ENCODE measurements at regions of chr19 and their contacts with region 1.

Region 1: DNA sequence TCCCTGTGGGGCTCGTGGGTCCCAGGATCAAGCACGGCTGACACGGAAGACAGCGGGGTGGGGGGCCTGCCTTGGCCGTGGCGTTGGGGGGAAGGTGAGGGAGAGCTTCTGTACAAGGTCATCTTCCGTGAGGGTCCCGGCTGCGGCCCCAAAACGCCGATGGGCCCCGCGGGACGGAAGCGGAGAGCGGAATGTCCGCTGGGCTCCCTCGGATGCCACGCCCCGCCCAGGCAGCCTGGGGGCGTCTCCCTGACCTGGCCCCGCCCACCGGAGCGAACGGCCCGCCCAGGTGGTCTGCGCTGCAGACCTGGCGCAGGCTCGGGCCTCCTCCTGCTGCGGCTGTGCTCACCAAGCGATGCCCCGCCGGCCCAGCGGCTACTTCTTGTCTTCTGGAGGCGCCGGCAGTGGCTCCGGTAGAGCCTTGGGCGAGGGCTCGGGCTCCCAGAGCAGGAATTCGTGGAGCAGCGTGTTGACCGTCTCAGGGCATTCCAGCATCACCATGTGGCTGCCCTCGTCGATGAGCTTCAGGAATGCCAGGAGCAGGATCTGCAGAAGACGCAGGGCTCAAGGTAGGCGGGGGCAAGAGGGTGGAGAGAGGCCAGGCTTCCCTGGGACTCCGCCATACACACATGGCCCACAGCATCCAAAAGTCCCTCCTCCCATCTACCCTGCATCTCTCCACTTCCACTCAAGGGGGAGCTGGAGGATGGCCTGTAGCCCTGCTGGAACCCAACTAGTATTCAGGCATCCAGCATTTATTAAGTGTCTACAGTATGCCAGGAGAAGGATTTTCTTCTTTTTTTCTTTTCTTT is 10.7 kb downstream of the ABHD8 start:
- DNase-seq: peak; percentile 58 to 91 (median 71)
- ATAC-seq: peak; percentile 98
- H3K4me3 ChIP-seq: peak overlapping the region; percentile 83
- H3K4me3 Mint-ChIP-seq: peak overlapping the region; percentile 92
- H3K27ac ChIP-seq: no peak overlapping the region
- H3K27ac Mint-ChIP-seq: peak overlapping the region; percentile 19
- H3K4me1 ChIP-seq: peaks cover 18% of the 10 kb centered on the region
- H3K4me1 Mint-ChIP-seq: peaks cover 9% of the 10 kb centered on the region
- H3K27me3 ChIP-seq: no peaks in the 10 kb centered on the region
- H3K27me3 Mint-ChIP-seq: peaks cover 4% of the 10 kb centered on the region
- CTCF ChIP-seq: peak; percentile 84

Region 2: GRCh38 chr19:16951529-16951928 is 341.0 kb before region 1 on chr19:
- CTCF ChIA-PET with region 1: no interaction called
- POLR2A ChIA-PET with region 1: no interaction called
- intact Hi-C with region 1: no loop called
- DNase-seq: no peak
- ATAC-seq: no peak
- H3K4me3 ChIP-seq: no peak overlapping the region
- H3K4me3 Mint-ChIP-seq: no peak overlapping the region
- H3K27ac ChIP-seq: no peak overlapping the region
- H3K27ac Mint-ChIP-seq: no peak overlapping the region
- H3K4me1 ChIP-seq: no peaks in the 10 kb centered on the region
- H3K4me1 Mint-ChIP-seq: no peaks in the 10 kb centered on the region
- H3K27me3 ChIP-seq: no peaks in the 10 kb centered on the region
- H3K27me3 Mint-ChIP-seq: peaks cover 33% of the 10 kb centered on the region
- CTCF ChIP-seq: no peak

Region 3: GRCh38 chr19:17232275-17232674 is 60.2 kb before region 1 on chr19:
- CTCF ChIA-PET with region 1: no interaction called
- POLR2A ChIA-PET with region 1: no interaction called
- intact Hi-C with region 1: no loop called
- DNase-seq: no peak
- ATAC-seq: no peak
- H3K4me3 ChIP-seq: no peak overlapping the region
- H3K4me3 Mint-ChIP-seq: peak overlapping the region; percentile 15
- H3K27ac ChIP-seq: no peak overlapping the region
- H3K27ac Mint-ChIP-seq: no peak overlapping the region
- H3K4me1 ChIP-seq: peaks cover 29% of the 10 kb centered on the region
- H3K4me1 Mint-ChIP-seq: peaks cover 6% of the 10 kb centered on the region
- H3K27me3 ChIP-seq: no peaks in the 10 kb centered on the region
- H3K27me3 Mint-ChIP-seq: no peaks in the 10 kb centered on the region
- CTCF ChIP-seq: no peak

Region 4: GRCh38 chr19:17327651-17328516 is 35.4 kb after region 1 on chr19:
- CTCF ChIA-PET with region 1: interaction called, 10 read pairs
- POLR2A ChIA-PET with region 1: interaction called, 11 read pairs
- intact Hi-C with region 1: no loop called
- DNase-seq: peak in 13 of 14 experiments; percentile 40 to 82 (median 54)
- ATAC-seq: peak; percentile 73
- H3K4me3 ChIP-seq: peak overlapping the region; percentile 61
- H3K4me3 Mint-ChIP-seq: peak overlapping the region; percentile 85
- H3K27ac ChIP-seq: peak overlapping the region in 1 of 2 donors; percentile 59
- H3K27ac Mint-ChIP-seq: peak overlapping the region; percentile 51
- H3K4me1 ChIP-seq: peaks cover 34% of the 10 kb centered on the region
- H3K4me1 Mint-ChIP-seq: peaks cover 13% of the 10 kb centered on the region
- H3K27me3 ChIP-seq: no peaks in the 10 kb centered on the region
- H3K27me3 Mint-ChIP-seq: no peaks in the 10 kb centered on the region
- CTCF ChIP-seq: no peak

Region 5: GRCh38 chr19:17336872-17337722 is 44.6 kb after region 1 on chr19 and contains the start of gene GTPBP3:
- CTCF ChIA-PET with region 1: interaction called, 8 read pairs
- POLR2A ChIA-PET with region 1: interaction called, 11 read pairs
- intact Hi-C with region 1: loop called (anchors 2 to 5 kb)
- DNase-seq: peak; percentile 92 to 98 (median 95)
- ATAC-seq: peak; percentile 89
- H3K4me3 ChIP-seq: peak within 1 kb of the TSS; percentile 71
- H3K4me3 Mint-ChIP-seq: peak within 1 kb of the TSS; percentile 93
- H3K27ac ChIP-seq: peak within 1 kb of the TSS; percentile 73 to 79
- H3K27ac Mint-ChIP-seq: peak within 1 kb of the TSS; percentile 86
- H3K4me1 ChIP-seq: peaks cover 54% of the 10 kb centered on the region
- H3K4me1 Mint-ChIP-seq: peaks cover 36% of the 10 kb centered on the region
- H3K27me3 ChIP-seq: no peaks in the 10 kb centered on the region
- H3K27me3 Mint-ChIP-seq: no peaks in the 10 kb centered on the region
- CTCF ChIP-seq: no peak
- total RNA-seq, gene GTPBP3: 21.2 to 24.0 TPM

Region 6: GRCh38 chr19:17346109-17346671 is 53.7 kb after region 1 on chr19:
- CTCF ChIA-PET with region 1: interaction called, 3 read pairs
- POLR2A ChIA-PET with region 1: no interaction called
- intact Hi-C with region 1: loop called in 1 of 2 experiments (anchors 1 kb)
- DNase-seq: peak; percentile 52 to 87 (median 72)
- ATAC-seq: peak; percentile 98
- H3K4me3 ChIP-seq: no peak overlapping the region
- H3K4me3 Mint-ChIP-seq: peak overlapping the region; percentile 34
- H3K27ac ChIP-seq: no peak overlapping the region
- H3K27ac Mint-ChIP-seq: no peak overlapping the region
- H3K4me1 ChIP-seq: peaks cover 10% of the 10 kb centered on the region
- H3K4me1 Mint-ChIP-seq: peaks cover 5% of the 10 kb centered on the region
- H3K27me3 ChIP-seq: peaks cover 2 to 18% of the 10 kb centered on the region in 2 experiments
- H3K27me3 Mint-ChIP-seq: peaks cover 37% of the 10 kb centered on the region
- CTCF ChIP-seq: peak; percentile 97

Region 7: DNA sequence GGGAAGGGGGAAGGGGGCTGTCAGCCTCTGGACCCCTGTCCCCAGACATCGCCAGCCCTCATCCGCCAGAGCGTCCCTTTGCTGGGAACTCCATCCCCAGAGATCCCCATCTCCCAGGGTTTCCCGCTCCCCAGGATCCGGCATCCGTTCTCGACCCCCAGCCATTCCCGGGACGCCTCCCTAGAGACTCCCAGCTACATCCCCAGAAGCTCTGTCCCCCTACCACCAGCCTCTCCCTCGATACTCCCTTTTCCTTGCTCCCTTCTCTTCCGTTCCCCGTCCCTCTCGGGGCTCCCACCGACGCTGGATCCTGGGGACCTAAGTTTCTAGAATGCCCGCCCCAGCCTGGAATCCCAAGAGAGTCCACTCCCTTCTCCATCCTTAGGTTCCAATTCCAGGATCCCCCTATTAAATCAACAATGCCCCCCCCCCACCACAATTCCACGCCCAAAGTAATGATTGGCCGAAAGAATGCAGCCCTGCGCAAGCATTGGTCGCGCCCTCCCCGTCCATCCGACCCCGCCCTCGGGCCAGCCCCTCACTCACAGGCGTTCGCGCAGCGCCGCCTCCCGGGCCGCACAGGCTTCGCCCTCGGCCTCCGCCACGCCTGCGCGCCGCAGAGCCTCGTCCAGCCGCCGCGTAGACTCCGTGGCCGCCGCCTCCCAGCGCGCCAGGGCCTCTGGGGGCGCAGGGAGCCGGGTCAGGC is 98.3 kb after region 1 on chr19:
- CTCF ChIA-PET with region 1: interaction called, 17 read pairs
- POLR2A ChIA-PET with region 1: interaction called, 3 read pairs
- intact Hi-C with region 1: loop called (anchors 1 kb)
- DNase-seq: peak; percentile 83 to 95 (median 87)
- ATAC-seq: peak; percentile 99
- H3K4me3 ChIP-seq: peak overlapping the region; percentile 74
- H3K4me3 Mint-ChIP-seq: peak overlapping the region; percentile 93
- H3K27ac ChIP-seq: no peak overlapping the region
- H3K27ac Mint-ChIP-seq: no peak overlapping the region
- H3K4me1 ChIP-seq: peaks cover 32% of the 10 kb centered on the region
- H3K4me1 Mint-ChIP-seq: peaks cover 23% of the 10 kb centered on the region
- H3K27me3 ChIP-seq: no peaks in the 10 kb centered on the region
- H3K27me3 Mint-ChIP-seq: no peaks in the 10 kb centered on the region
- CTCF ChIP-seq: peak; percentile 67

Measured in CD4-positive, alpha-beta T cell (primary cell).